PC-9 (cell line): ENCODE measurements at regions of chr13 and their contacts with region 1.

Region 1: DNA sequence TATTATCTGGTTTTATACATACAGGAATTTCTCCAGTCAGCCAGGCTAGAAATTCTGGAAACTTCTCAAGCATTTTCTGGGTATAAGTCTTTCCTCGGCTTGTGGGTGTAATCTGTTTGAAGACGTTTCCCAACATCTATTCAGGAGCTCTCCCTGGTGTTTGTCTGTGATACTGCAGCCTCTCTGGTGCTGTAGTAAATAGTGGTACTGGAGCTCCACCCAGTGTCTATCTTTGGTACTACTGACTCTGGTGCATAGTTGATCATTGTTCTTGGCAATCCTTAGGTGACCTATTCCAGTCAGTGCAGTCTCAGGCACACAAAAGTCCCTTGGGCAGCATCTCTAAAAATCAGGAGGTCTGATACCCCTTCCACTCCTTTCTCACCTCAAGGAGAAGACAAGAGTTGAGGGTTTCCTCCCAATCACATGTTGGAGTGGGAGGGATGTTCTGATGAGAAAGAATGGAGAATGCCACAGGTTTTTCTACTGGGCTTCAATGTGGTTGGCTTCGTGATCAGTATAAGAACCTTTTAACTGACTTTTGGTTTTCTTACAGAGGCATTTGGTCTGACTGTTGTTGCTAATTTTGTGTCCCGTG is 115.5 kb downstream of the CYSLTR2 start:
- DNase-seq: peak; percentile 71 to 72
- H3K4me3 ChIP-seq: no peak overlapping the region
- H3K27ac ChIP-seq: no peak overlapping the region
- H3K4me1 ChIP-seq: no peaks in the 10 kb centered on the region
- H3K27me3 ChIP-seq: no peaks in the 10 kb centered on the region
- CTCF ChIP-seq: peak; percentile 99

Region 2: DNA sequence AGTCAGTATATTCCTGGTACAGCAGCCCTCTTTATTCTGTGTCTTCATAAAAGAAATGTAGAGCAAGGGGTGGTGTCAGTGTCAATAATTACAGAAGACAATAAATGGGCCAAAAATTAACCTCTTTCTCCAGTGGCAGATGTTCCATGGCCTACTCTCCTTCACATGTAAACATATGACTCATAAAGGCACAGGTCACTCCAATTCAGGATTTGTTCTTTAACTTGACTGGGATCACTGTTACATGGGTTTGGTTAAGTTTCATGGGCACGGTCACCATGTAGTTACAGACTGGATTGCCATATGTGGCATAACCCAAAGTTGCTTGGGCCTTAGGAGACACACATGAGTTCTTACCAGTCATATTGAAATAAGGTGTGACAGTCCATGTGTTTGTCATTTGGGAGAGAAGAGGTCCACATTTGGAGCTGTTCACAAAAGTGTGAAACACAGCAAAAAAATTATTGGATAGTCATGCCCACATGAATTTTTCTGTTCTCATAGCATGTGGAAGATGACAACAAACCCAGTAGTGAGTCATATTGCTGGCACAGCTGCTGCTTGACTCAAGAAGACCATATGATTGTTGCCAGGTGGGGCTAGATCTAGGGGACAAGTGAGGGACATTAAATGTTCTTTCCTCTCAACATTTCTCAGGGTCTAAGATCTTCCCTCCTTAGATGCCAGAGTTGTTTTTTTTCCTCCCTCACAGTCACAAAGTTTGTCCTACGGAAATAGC is 1804.2 kb before region 1 on chr13:
- CTCF ChIA-PET with region 1: no interaction called
- POLR2A ChIA-PET with region 1: no interaction called
- intact Hi-C with region 1: loop called (anchors 5 kb)
- DNase-seq: no peak
- H3K4me3 ChIP-seq: no peak overlapping the region
- H3K27ac ChIP-seq: no peak overlapping the region
- H3K4me1 ChIP-seq: peaks cover 6% of the 10 kb centered on the region; the same call in 1 of the 2 replicates
- H3K27me3 ChIP-seq: no peaks in the 10 kb centered on the region
- CTCF ChIP-seq: no peak

Region 3: GRCh38 chr13:47794963-47795362 is 974.2 kb before region 1 on chr13:
- CTCF ChIA-PET with region 1: no interaction called
- POLR2A ChIA-PET with region 1: no interaction called
- intact Hi-C with region 1: loop called (anchors 2 kb)
- DNase-seq: no peak
- H3K4me3 ChIP-seq: no peak overlapping the region
- H3K27ac ChIP-seq: no peak overlapping the region
- H3K4me1 ChIP-seq: no peaks in the 10 kb centered on the region
- H3K27me3 ChIP-seq: no peaks in the 10 kb centered on the region
- CTCF ChIP-seq: peak; percentile 64

Region 4: GRCh38 chr13:48334534-48335127 is 434.6 kb before region 1 on chr13:
- CTCF ChIA-PET with region 1: no interaction called
- POLR2A ChIA-PET with region 1: no interaction called
- intact Hi-C with region 1: loop called (anchors 1 kb)
- DNase-seq: no peak
- H3K4me3 ChIP-seq: no peak overlapping the region
- H3K27ac ChIP-seq: no peak overlapping the region
- H3K4me1 ChIP-seq: 0 out of 2 replicates have a peak, but pooled peaks cover 6% of the 10 kb centered on the region
- H3K27me3 ChIP-seq: no peaks in the 10 kb centered on the region
- CTCF ChIP-seq: peak; percentile 77

Region 5: DNA sequence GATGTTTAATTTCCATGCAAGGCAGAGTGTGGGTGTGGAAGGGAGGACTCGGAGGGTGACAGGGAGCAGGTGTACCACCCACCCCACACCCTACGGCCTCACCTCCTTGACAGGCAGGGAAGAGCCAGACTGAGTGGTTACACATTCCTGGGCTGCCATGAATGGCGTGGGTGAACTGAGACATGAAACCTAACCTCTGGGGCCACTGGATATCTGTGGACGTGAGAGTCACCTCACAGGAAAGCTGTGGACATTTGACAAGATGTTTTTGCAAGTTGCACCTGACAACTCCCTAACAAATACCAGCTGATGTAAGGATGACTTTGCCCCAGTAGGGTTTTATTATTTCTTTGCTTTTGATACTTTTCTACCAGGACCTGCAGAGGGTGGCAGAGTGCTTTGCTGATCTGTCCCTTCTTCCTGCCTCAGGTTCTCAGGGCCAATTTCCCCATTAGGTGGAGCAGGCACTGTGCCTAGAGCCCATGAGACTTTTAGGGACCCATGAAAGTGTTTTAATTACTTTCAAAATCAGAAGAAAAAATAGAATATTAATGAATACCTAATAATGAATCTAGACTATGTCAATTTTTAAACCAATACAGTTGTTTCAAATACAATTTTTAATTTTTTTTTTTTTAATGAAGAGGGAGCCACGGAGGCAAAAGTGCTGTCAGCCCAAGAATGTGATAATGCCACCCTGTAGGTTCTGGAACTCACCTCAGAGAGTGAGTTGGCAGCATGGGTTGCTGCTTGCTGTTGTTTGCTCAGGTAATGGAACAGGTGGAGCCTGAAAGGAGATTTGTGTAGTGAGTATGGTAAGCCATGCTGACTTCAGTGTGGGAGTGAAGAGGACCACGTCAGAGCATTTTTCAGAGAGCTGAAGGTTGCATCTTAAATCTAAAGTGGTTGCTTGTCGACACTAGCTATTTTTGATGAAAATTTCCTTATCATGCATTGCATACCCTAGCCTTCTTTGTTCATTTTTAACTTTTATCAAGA is 173.5 kb before region 1 on chr13:
- CTCF ChIA-PET with region 1: interaction called, 7 read pairs
- POLR2A ChIA-PET with region 1: no interaction called
- intact Hi-C with region 1: loop called (anchors 1 kb)
- DNase-seq: peak in 1 of 2 experiments; percentile 31
- H3K4me3 ChIP-seq: no peak overlapping the region
- H3K27ac ChIP-seq: no peak overlapping the region
- H3K4me1 ChIP-seq: no peaks in the 10 kb centered on the region
- H3K27me3 ChIP-seq: no peaks in the 10 kb centered on the region
- CTCF ChIP-seq: peak; percentile 64

Region 6: DNA sequence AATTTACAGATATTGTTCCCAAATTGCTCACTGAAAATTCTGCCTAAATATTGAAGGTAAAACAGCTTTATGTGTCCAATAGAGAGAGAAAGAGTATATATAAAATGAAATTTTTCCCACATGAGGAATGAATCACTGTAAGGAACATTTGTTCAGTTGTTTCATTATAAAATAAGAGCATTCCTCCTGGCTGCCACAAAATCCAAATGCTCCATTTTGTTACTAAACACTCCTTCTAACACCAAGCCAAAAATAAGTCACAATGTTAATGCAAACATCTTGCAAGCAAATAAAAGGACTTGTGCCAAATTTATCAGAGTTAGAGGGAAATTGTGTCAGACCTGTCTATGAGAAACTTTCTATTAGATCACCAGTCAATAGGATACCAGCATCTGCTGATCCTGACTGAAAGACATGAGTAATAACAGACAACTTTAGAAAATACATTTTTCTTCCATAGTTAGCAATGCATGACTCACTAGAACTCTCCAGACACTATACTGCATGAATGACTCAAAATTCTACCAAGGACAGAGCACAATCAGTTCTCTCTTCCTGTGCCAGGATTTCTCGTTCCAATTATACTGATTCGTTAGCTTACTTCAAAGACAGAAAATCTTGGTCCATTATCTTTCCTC is 123.0 kb after region 1 on chr13:
- CTCF ChIA-PET with region 1: no interaction called
- POLR2A ChIA-PET with region 1: no interaction called
- intact Hi-C with region 1: no loop called
- DNase-seq: peak in 1 of 2 experiments; percentile 46
- H3K4me3 ChIP-seq: no peak overlapping the region
- H3K27ac ChIP-seq: no peak overlapping the region
- H3K4me1 ChIP-seq: no peaks in the 10 kb centered on the region
- H3K27me3 ChIP-seq: no peaks in the 10 kb centered on the region
- CTCF ChIP-seq: no peak

Region 7: GRCh38 chr13:49300739-49301589 is 531.8 kb after region 1 on chr13:
- CTCF ChIA-PET with region 1: no interaction called
- POLR2A ChIA-PET with region 1: no interaction called
- intact Hi-C with region 1: no loop called
- DNase-seq: peak; percentile 47 to 65
- H3K4me3 ChIP-seq: no peak overlapping the region; the same call in 1 of the 2 replicates
- H3K27ac ChIP-seq: no peak overlapping the region
- H3K4me1 ChIP-seq: no peaks in the 10 kb centered on the region; the same call in 1 of the 2 replicates
- H3K27me3 ChIP-seq: no peaks in the 10 kb centered on the region
- CTCF ChIP-seq: peak; percentile 94